Activated naive CD4-positive, alpha-beta T cell treated with anti-CD3 and anti-CD28 coated beads for 36 hours (primary cell): ENCODE measurements at regions of chr1 and their contacts with region 1.

Region 1: DNA sequence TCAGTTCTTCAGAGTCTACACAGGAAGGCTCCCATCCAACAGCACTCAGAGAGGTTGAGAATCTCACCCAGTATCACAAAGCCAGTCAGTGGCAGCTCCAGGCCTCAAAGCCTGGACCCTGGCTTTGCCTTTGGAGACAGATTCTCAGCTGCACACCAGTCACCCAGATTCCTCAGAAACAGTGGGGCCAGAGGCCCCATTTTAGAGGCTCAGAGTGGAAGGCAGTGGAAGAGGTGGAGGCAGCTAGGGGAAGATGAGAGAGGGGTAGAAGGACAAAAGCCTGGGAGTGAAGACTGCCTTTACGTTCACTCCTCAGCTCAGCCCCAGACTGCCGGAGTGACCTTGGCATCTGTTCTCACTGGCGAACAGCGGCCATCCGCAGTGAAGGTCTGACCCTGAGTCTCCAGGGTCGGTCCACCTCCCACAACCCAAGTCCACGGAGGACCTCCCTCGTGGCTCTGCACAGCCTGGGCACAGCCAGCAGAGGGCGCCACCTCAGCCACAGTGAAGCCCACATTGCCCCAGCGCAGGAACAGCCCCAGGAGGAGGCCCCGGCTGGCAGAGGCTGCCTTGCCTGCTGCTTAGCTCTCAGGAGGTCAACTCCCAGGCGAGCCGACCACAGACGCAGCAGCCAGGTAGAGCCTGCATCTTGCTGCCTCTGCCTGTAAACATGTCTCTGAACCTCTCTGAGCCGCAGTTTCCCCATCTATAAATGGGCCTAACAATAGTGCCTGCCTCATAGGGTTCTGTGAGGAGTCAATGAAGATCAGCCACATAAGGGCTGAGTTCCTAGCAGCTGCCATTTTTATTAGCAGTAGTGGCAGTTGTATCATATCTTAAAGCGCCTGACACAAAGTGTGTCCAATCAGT is 5.9 kb upstream of the FNDC5 start:
- DNase-seq: peak; percentile 75
- H3K4me3 Mint-ChIP-seq: no peak overlapping the region
- H3K27ac Mint-ChIP-seq: no peak overlapping the region
- H3K4me1 Mint-ChIP-seq: no peaks in the 10 kb centered on the region
- H3K27me3 Mint-ChIP-seq: peaks cover 29% of the 10 kb centered on the region

Region 2: DNA sequence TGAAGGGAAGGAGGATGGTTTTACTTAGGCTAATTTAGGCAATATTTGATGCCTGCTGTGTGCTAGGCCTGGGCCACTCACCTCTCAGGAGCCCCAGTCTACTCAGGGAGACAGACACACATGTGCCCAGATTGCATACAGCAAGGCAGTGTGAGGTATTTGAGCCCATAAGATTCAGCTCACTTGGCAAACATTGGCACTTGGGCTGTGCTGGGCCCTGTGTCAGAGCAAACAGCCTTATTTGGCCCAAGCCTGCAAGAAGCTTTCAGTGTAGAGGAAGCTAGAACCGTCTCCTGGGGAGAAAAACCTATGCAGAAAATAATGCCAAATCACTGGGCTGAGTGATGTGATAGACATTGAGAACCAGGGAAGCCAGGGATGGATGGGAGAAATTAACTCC is 170.1 kb before region 1 on chr1:
- CTCF ChIA-PET with region 1: interaction called, 63 read pairs
- intact Hi-C with region 1: no loop called
- DNase-seq: no peak
- H3K4me3 Mint-ChIP-seq: no peak overlapping the region
- H3K27ac Mint-ChIP-seq: no peak overlapping the region
- H3K4me1 Mint-ChIP-seq: peaks cover 11% of the 10 kb centered on the region
- H3K27me3 Mint-ChIP-seq: peaks cover 26% of the 10 kb centered on the region

Region 3: GRCh38 chr1:32892368-32893197 is 16.0 kb after region 1 on chr1:
- CTCF ChIA-PET with region 1: interaction called, 10 read pairs
- intact Hi-C with region 1: no loop called
- DNase-seq: peak; percentile 47
- H3K4me3 Mint-ChIP-seq: peak overlapping the region; percentile 14
- H3K27ac Mint-ChIP-seq: no peak overlapping the region
- H3K4me1 Mint-ChIP-seq: peaks cover 7% of the 10 kb centered on the region
- H3K27me3 Mint-ChIP-seq: peaks cover 48% of the 10 kb centered on the region

Region 4: GRCh38 chr1:33086384-33086850 is 209.8 kb after region 1 on chr1:
- CTCF ChIA-PET with region 1: interaction called, 23 read pairs
- intact Hi-C with region 1: loop called (anchors 2 kb)
- DNase-seq: peak; percentile 66
- H3K4me3 Mint-ChIP-seq: no peak overlapping the region
- H3K27ac Mint-ChIP-seq: no peak overlapping the region
- H3K4me1 Mint-ChIP-seq: peaks cover 25% of the 10 kb centered on the region
- H3K27me3 Mint-ChIP-seq: no peaks in the 10 kb centered on the region

Region 5: GRCh38 chr1:33367485-33368405 is 491.2 kb after region 1 on chr1:
- CTCF ChIA-PET with region 1: no interaction called
- intact Hi-C with region 1: loop called (anchors 5 kb)
- DNase-seq: peak; percentile 92
- H3K4me3 Mint-ChIP-seq: no peak overlapping the region
- H3K27ac Mint-ChIP-seq: no peak overlapping the region
- H3K4me1 Mint-ChIP-seq: no peaks in the 10 kb centered on the region
- H3K27me3 Mint-ChIP-seq: no peaks in the 10 kb centered on the region